SK-N-SH (cell line): ENCODE measurements at regions of chr1 and their contacts with region 1.

Region 1: DNA sequence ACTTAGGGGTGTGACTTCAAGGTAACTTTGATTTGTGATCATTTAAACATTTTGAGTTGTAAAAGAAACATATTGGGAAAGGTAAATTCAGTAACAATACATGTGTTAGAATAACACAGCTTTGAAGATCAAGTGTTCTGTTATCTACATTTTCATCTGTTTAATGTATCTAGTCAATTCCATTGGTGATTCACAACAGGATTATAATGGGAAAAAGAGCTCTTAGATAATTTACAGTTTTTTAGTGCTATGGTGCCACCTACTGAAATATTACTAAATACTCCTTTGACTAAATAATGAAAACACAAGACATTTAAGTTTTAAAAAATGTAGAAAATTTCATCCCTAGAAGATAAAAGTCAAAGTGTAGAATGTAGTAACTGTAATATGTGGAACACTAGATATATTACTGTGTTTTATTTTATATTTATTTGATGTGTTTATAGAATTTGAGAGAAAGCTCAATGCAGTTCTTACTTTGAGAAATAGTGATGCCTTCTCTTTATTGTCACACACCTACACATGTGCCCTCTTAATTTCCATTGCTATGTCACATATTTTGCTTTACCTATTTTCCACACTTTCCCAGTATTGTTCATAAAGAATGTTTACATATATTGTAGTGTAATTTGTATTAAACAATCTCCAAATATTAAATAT is 47.4 kb downstream of the PTPRC start:
- DNase-seq: no peak
- H3K4me3 ChIP-seq: no peak overlapping the region
- H3K27ac ChIP-seq: peak overlapping the region; percentile 27 to 77
- H3K4me1 ChIP-seq: peaks cover 32 to 39% of the 10 kb centered on the region in 2 experiments; a peak in 3 of 4 replicates
- H3K27me3 ChIP-seq: no peaks in the 10 kb centered on the region
- CTCF ChIP-seq: peak; percentile 74
- EP300 ChIP-seq: no peak
- RAD21 ChIP-seq: peak; percentile 76

Region 2: DNA sequence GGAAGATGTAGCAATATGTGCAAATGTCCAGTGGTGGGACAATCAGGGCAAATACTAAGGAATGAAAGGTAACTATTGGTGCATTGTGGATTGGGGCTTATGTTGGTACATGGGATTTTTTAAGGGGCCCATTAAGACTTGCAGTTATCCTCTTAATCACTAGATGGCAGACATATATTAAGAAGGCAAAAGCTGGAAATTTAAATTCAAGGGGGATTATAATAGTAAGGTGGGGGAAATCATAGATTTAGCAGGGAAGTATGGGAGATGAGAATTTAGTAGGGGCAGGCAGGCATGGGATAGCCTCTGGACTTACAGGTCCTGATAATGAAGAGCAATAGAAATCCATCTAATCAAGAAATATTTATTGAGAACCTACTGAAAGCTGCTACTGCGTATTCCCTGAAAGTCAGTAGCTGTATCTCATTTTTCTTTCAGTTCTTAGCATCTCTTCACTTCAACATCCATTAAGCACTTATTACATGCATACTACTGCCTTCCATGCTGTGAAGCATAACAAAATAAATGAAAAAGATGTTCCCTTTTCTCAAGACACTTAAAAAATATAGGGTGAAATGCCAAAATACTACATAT is 1166.4 kb before region 1 on chr1:
- CTCF ChIA-PET with region 1: interaction called, 10 read pairs
- POLR2A ChIA-PET with region 1: no interaction called
- DNase-seq: no peak
- H3K4me3 ChIP-seq: no peak overlapping the region
- H3K27ac ChIP-seq: no peak overlapping the region
- H3K4me1 ChIP-seq: no peaks in the 10 kb centered on the region; a peak in 1 of 4 replicates
- H3K27me3 ChIP-seq: no peaks in the 10 kb centered on the region
- CTCF ChIP-seq: peak; percentile 64
- EP300 ChIP-seq: no peak
- RAD21 ChIP-seq: peak; percentile 32

Region 3: DNA sequence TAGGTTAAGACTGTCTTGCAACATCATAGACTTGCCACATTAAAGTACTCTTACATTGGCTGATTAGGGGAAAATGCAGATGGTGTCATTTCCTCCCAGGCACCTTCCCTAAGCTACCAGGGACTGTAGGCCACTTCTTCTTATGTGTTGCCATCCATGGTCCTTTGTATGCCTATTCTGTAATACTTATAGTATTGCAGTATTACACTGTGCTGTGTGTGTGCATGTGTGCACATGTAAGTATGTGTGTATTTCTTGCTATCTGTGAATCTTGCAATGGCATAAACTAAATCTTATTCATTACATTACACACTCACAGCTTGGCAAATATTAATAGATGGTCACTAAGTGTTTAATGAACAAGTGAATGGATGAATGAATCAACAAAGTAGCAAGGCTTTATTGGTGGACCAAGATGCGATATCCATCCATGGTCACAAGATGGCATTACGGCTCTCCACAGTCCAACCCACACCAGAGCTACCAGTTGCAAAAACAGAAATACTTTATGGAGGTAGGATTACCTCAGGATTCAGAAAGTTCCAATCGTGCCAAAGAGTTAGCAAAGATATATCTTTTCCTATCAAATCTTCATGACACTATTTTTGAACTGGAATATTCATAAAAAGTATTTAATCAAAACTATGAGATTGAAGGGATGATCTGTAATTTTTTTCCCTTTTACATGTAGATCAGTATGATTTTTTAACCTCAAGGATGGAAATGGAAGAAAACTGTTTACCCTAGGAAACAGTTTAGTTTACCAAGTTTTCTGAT is 1071.1 kb before region 1 on chr1:
- CTCF ChIA-PET with region 1: interaction called, 13 read pairs
- POLR2A ChIA-PET with region 1: no interaction called
- DNase-seq: no peak
- H3K4me3 ChIP-seq: no peak overlapping the region; a peak in 1 of 4 replicates
- H3K27ac ChIP-seq: no peak overlapping the region
- H3K4me1 ChIP-seq: peaks cover 0 to 3% of the 10 kb centered on the region in 2 experiments; a peak in 2 of 4 replicates
- H3K27me3 ChIP-seq: no peaks in the 10 kb centered on the region
- CTCF ChIP-seq: peak; percentile 73
- EP300 ChIP-seq: no peak
- RAD21 ChIP-seq: peak; percentile 80

Region 4: DNA sequence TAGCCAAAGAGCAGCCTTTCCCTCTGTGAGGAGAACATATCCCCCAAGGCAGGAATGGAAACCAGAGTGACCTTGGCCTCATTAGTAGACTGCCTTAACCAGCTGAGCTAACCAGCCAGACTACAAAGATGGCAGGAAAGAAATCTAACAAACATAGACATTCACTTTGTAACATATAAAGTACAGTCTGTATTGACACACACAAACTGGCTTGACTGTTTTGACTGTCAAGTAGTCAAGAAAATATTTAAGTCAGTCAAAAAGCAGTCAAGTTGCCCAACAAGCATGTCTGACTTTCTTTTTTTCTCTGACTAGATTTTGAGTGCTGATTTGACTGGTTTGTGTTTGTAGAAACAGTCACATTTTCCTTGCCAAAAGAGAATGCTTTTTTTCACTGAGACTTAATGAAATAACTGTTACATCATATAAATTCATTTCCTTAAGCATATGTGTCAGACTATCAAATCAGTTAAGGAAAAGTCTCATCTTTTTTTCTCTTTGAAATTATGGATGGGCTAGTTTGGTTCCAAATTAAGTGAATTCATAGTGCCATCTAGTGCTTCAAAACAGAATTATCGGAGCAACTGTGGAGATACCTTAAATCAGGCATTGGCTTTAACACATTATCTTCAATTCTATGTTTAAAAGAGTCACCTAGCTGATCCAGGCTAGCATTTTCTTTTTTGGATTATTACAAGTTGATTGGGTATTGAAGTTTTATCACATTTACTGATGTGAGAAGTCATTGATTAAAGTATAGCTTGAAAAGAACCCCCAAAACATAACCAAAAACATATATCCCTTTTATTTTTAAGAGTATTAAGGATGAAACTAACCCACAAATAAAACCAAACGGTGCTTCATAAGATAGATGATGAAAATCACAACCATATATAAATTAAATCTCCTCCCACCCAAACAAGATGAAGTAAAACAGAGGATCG is 220.7 kb before region 1 on chr1:
- CTCF ChIA-PET with region 1: interaction called, 20 read pairs
- POLR2A ChIA-PET with region 1: no interaction called
- DNase-seq: peak; percentile 20
- H3K4me3 ChIP-seq: no peak overlapping the region; a peak in 1 of 4 replicates
- H3K27ac ChIP-seq: peak overlapping the region; percentile 36 to 44; a peak in 3 of 4 replicates
- H3K4me1 ChIP-seq: peaks cover 11 to 14% of the 10 kb centered on the region in 2 experiments
- H3K27me3 ChIP-seq: no peaks in the 10 kb centered on the region
- CTCF ChIP-seq: peak; percentile 80
- EP300 ChIP-seq: no peak
- RAD21 ChIP-seq: peak; percentile 86

Region 5: GRCh38 chr1:198549866-198550265 is 136.3 kb before region 1 on chr1:
- CTCF ChIA-PET with region 1: no interaction called
- POLR2A ChIA-PET with region 1: no interaction called
- DNase-seq: no peak
- H3K4me3 ChIP-seq: no peak overlapping the region
- H3K27ac ChIP-seq: no peak overlapping the region
- H3K4me1 ChIP-seq: no peaks in the 10 kb centered on the region; a peak in 1 of 4 replicates
- H3K27me3 ChIP-seq: no peaks in the 10 kb centered on the region
- CTCF ChIP-seq: no peak
- EP300 ChIP-seq: no peak
- RAD21 ChIP-seq: no peak

Region 6: GRCh38 chr1:198651650-198652400 is 34.4 kb before region 1 on chr1:
- CTCF ChIA-PET with region 1: no interaction called
- POLR2A ChIA-PET with region 1: no interaction called
- DNase-seq: no peak
- H3K4me3 ChIP-seq: no peak overlapping the region
- H3K27ac ChIP-seq: no peak overlapping the region; a peak in 2 of 4 replicates
- H3K4me1 ChIP-seq: peaks cover 19 to 28% of the 10 kb centered on the region in 2 experiments; a peak in 3 of 4 replicates
- H3K27me3 ChIP-seq: no peaks in the 10 kb centered on the region
- CTCF ChIP-seq: no peak
- EP300 ChIP-seq: no peak
- RAD21 ChIP-seq: no peak

Region 7: DNA sequence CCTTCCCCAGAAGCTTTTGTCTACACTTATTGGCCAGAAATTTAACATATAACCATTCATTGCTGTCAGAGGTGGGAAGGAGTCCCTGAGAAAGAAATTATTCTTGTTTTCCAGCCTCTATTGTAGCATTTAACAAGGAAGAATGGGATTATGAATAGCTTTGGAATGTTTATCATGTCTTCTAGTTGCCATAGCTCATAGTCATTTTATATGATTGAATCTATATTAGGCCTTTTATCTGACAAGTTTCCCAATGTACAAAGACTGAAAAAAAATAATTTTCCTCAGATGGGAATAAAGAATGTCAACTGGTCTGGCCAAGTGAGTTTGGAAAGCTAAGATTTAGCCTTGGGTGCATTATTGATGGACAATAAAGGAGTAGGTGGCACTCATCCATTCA is 19.0 kb before region 1 on chr1:
- CTCF ChIA-PET with region 1: interaction called, 10 read pairs
- POLR2A ChIA-PET with region 1: no interaction called
- DNase-seq: no peak
- H3K4me3 ChIP-seq: no peak overlapping the region
- H3K27ac ChIP-seq: peak overlapping the region; percentile 69 to 88; a peak in 3 of 4 replicates
- H3K4me1 ChIP-seq: peaks cover 11 to 38% of the 10 kb centered on the region in 2 experiments; a peak in 3 of 4 replicates
- H3K27me3 ChIP-seq: no peaks in the 10 kb centered on the region
- CTCF ChIP-seq: no peak
- EP300 ChIP-seq: peak in 1 of 2 experiments; percentile 34; a peak in 1 of 4 replicates
- RAD21 ChIP-seq: no peak